Activated T-helper 1 cell treated with anti-CD3 and anti-CD28 coated beads, Interleukin-12 subunit alpha, Interleukin-12 subunit beta, Interleukin-2, Interleukin-4 antibody, amounts not matched to agents 30 ng/mL and 10 ng/mL and 1 ng/mL, durations not matched to agents 14 hours and 24 hours and 36 hours (primary cell): ENCODE measurements at regions of chr2 and their contacts with region 1.

Region 1: DNA sequence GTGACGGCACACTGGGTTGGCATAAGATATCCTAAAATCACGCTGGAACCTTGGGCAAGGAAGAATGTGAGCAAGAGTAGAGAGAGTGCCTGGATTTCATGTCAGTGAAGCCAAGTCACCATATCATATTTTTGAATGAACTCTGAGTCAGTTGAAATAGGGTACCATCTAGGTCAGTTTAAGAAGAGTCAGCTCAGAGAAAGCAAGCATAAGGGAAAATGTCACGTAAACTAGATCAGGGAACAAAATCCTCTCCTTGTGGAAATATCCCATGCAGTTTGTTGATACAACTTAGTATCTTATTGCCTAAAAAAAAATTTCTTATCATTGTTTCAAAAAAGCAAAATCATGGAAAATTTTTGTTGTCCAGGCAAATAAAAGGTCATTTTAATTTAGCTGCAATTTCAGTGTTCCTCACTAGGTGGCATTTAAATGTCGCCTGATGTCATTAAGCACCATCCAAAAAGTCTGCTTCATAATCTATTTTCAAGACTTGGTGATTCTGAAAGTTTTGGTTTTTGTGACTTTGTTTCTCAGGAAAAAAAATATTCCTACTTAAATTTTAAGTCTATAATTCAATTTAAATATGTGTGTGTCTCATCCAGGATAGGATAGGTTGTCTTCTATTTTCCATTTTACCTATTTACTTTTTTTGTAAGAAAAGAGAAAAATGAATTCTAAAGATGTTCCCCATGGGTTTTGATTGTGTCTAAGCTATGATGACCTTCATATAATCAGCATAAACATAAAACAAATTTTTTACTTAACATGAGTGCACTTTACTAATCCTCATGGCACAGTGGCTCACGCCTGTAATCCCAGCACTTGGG is 19.6 kb downstream of the RSAD2 start:
- DNase-seq: no peak
- H3K4me3 Mint-ChIP-seq: no peak overlapping the region
- H3K27ac Mint-ChIP-seq: peak overlapping the region; percentile 53
- H3K4me1 Mint-ChIP-seq: peaks cover 9% of the 10 kb centered on the region
- H3K27me3 Mint-ChIP-seq: no peaks in the 10 kb centered on the region

Region 2: DNA sequence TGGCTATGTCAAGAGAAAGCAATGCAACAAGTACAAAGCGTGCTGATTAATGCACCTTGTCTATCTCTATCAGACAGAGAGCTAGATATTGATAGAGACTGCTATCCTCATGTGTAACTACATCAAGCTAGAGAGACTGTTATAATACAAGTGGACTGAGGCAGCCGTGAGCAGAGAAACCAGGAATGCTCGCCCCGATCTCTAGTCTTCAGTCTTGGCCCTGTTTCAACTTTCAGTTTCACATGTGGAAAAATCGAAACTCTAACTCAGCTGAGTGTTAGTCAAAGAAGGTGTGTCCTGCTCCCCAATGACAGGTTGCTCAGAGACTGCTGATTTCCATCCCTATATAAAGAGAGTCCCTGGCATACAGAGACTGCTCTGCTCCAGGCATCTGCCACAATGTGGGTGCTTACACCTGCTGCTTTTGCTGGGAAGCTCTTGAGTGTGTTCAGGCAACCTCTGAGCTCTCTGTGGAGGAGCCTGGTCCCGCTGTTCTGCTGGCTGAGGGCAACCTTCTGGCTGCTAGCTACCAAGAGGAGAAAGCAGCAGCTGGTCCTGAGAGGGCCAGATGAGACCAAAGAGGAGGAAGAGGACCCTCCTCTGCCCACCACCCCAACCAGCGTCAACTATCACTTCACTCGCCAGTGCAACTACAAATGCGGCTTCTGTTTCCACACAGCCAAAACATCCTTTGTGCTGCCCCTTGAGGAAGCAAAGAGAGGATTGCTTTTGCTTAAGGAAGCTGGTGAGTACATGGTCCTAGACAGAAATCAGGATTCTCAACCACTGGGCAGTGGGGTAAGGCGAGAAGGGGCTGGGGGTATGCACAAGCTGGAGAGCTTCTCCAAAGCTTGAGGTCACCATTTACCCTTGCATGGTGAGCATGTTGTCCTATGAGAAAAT is 19.5 kb before region 1 on chr2 and contains the start of gene RSAD2:
- intact Hi-C with region 1: loop called (anchors 1 kb)
- DNase-seq: peak; percentile 46
- H3K4me3 Mint-ChIP-seq: peak within 1 kb of the TSS; percentile 86
- H3K27ac Mint-ChIP-seq: peak within 1 kb of the TSS; percentile 80
- H3K4me1 Mint-ChIP-seq: peaks cover 83% of the 10 kb centered on the region
- H3K27me3 Mint-ChIP-seq: no peaks in the 10 kb centered on the region
- total RNA-seq, gene RSAD2: 2.2 and 2.4 TPM in 2 replicates

Region 3: DNA sequence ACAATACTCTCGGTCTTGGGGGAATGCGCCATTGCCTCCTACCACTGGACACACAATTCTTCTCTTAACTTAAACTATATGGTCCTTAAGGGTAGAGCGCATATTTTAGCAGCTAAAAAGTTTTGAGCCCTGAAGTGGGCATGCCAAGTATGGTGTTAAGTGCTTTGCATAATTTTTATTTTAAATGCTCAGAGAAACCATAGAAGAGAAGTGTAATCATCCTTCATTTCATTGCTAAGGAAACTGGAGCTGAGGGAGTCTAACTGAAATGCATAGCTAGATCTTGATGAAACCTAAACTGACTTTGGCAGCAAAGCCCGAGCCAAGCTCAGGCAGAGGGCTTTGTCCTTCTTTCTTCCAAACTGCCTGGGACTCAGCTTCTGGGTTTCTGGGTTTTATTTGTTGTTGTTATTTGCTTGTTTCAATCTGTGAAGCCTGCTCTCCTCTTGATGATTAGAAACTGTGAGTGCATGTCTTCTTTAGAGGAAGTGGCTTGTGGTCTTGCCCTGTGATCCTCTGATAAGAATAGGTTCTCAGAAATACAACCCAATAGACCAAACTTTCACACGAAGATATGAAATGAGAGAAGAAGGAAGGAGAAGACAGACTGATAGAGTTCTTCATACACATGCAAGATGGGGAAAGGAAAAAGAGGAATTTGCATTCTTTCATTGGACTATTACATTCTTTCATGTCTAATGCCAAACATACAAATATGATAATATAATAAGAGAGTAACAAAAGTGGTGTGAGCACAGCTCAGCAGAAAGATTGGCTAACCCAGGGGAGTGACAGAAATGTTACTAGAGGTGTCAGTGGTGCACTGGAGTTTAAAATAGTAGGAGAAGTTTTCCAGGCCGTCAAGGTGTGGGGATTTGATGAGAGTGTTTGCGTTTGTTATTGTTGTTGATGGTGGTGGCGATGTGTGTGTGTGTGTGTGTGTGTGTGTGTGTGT is 12.6 kb after region 1 on chr2:
- intact Hi-C with region 1: loop called (anchors 1 kb)
- DNase-seq: peak; percentile 59
- H3K4me3 Mint-ChIP-seq: peak overlapping the region; percentile 66
- H3K27ac Mint-ChIP-seq: peak overlapping the region; percentile 83
- H3K4me1 Mint-ChIP-seq: peaks cover 90% of the 10 kb centered on the region
- H3K27me3 Mint-ChIP-seq: peaks cover 7% of the 10 kb centered on the region

Region 4: GRCh38 chr2:6917071-6917760 is 20.1 kb after region 1 on chr2 and contains the start of gene RNF144A:
- intact Hi-C with region 1: loop called (anchors 1 kb)
- DNase-seq: peak; percentile 71
- H3K4me3 Mint-ChIP-seq: peak within 1 kb of the TSS; percentile 74
- H3K27ac Mint-ChIP-seq: peak within 1 kb of the TSS; percentile 59
- H3K4me1 Mint-ChIP-seq: peaks cover 52% of the 10 kb centered on the region
- H3K27me3 Mint-ChIP-seq: peaks cover 16% of the 10 kb centered on the region
- total RNA-seq, gene RNF144A: 14.4 and 16.6 TPM in 2 replicates

Region 5: DNA sequence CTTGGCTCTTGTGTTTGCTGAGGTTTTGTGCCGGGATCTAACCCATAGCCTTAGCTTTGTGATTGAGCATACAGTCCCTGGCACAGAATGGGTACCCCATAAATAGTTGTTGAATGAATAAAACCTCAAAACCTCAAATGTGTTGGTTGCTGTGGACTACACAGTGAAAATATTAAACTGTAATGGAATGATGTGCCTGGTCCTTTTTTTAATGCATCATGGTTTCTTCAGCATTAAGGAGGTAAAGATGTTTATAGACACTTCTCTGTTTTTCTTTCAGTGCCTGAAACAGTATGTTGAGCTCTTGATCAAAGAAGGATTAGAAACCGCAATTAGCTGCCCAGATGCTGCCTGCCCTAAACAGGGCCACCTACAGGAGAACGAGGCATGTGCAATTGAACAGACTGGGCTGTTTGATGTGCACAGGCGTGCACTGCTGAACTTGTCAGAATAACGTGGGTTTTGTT is 117.1 kb after region 1 on chr2:
- intact Hi-C with region 1: loop called (anchors 1 kb)
- DNase-seq: no peak
- H3K4me3 Mint-ChIP-seq: no peak overlapping the region
- H3K27ac Mint-ChIP-seq: peak overlapping the region; percentile 1
- H3K4me1 Mint-ChIP-seq: peaks cover 18% of the 10 kb centered on the region
- H3K27me3 Mint-ChIP-seq: no peaks in the 10 kb centered on the region

Region 6: GRCh38 chr2:7044261-7045250 is 147.4 kb after region 1 on chr2:
- intact Hi-C with region 1: loop called (anchors 1 kb)
- DNase-seq: peak; percentile 46
- H3K4me3 Mint-ChIP-seq: no peak overlapping the region
- H3K27ac Mint-ChIP-seq: no peak overlapping the region
- H3K4me1 Mint-ChIP-seq: peaks cover 5% of the 10 kb centered on the region
- H3K27me3 Mint-ChIP-seq: no peaks in the 10 kb centered on the region

Region 7: DNA sequence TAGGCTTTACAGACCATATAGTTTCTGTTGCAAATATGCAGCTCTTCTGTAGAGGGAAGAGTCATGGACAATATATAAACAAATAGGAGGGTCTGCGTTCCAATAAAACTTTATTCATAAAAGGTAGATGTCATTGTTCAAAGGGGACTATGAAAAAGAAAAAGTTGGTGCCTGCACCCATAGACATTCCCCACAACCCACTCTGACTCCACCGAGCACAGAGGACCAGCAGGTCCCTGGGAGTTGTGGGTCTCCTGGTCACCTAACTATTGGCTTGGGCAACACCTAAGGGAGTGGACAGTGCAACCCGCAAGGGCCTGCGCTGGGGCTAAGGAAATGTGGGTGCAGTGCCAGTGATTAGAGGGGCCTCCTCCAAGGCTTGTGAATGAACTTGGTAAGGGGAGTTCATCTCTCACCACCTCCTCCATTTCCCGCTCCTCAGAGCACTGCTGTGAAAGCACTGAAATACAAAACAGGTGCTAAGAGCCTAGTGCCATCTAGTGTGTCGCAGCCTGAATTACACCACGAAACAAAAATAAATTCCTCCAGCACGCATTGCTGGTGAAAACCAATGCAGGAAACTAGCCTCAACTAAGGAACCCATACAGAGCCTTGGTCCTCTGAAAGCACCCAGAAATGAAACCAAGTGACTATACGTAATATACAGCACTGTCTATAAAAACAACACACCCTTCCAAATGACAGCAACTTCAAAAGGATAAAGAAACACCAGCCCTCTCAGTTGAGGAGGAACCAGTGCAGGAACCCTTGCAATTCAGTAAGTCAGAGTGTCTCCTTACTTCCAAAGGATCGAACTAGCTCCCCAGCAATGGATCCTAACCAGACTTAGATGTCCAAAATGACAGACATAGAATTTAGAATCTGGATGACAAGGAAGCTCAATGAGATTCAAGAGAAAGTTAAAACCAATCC is 186.7 kb after region 1 on chr2:
- intact Hi-C with region 1: loop called (anchors 1 kb)
- DNase-seq: no peak
- H3K4me3 Mint-ChIP-seq: no peak overlapping the region
- H3K27ac Mint-ChIP-seq: no peak overlapping the region
- H3K4me1 Mint-ChIP-seq: no peaks in the 10 kb centered on the region
- H3K27me3 Mint-ChIP-seq: peaks cover 5% of the 10 kb centered on the region